ENCODE measurements at regions of chr12 and their contacts with region 1.

Region 1: DNA sequence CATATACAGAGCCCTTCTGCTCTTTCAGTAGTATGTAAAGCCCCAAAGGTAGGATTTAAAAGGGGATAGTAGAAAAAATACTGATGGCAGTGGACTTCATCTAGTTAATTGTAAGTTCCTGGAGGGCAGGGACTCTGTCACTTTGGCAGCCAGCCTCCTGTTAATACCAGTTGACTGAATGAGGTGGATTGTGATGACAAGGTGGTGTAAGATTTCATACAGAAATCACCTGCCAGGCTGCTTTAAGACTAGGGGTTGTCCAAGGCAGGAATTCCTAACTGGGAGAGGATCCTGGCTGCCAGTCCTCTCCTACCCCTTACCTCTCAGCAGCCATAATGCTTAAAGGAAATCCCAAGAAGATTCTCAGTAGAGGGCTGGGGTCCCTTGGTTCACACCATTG is 7.3 kb downstream of the DYRK2 start:
- DNase-seq: peak in 1 of 2 donors; percentile 28
- ATAC-seq: peak; percentile 43 to 52
- H3K4me3 ChIP-seq: no peak overlapping the region
- H3K27ac ChIP-seq: peak overlapping the region; percentile 98 to 100 (median 99)
- H3K4me1 ChIP-seq: peaks cover 82 to 100% of the 10 kb centered on the region in 2 donors
- H3K27me3 ChIP-seq: no peaks in the 10 kb centered on the region
- CTCF ChIP-seq: no peak
- POLR2A ChIP-seq: no peak

Region 2: GRCh38 chr12:67797185-67797741 is 141.4 kb after region 1 on chr12:
- in situ Hi-C with region 1: no loop called
- intact Hi-C with region 1: loop called (anchors 5 kb)
- DNase-seq: peak; percentile 27 to 61
- ATAC-seq: peak; percentile 98 to 100
- H3K4me3 ChIP-seq: peak overlapping the region in 1 of 4 donors; percentile 25
- H3K27ac ChIP-seq: peak overlapping the region; percentile 65 to 79 (median 76)
- H3K4me1 ChIP-seq: peaks cover 26 to 27% of the 10 kb centered on the region in 2 donors
- H3K27me3 ChIP-seq: no peaks in the 10 kb centered on the region
- CTCF ChIP-seq: no peak
- POLR2A ChIP-seq: no peak